ENCODE measurements at regions of chr6 and their contacts with region 1.

Region 1: GRCh38 chr6:39389484-39389767 is 66.9 kb upstream of the KCNK16 start:
- DNase-seq: no peak
- ATAC-seq: peak; percentile 23
- H3K4me3 ChIP-seq: no peak overlapping the region
- H3K27ac ChIP-seq: no peak overlapping the region
- H3K4me1 ChIP-seq: no peaks in the 10 kb centered on the region; the same call in 1 of the 2 replicates
- H3K27me3 ChIP-seq: peaks cover 0 to 3% of the 10 kb centered on the region in 2 experiments; a peak in 1 of 4 replicates
- CTCF ChIP-seq: no peak; a peak in 1 of 6 replicates
- EP300 ChIP-seq: no peak
- POLR2A ChIP-seq: no peak
- RAD21 ChIP-seq: peak; percentile 25; the same call in 1 of the 2 replicates

Region 2: DNA sequence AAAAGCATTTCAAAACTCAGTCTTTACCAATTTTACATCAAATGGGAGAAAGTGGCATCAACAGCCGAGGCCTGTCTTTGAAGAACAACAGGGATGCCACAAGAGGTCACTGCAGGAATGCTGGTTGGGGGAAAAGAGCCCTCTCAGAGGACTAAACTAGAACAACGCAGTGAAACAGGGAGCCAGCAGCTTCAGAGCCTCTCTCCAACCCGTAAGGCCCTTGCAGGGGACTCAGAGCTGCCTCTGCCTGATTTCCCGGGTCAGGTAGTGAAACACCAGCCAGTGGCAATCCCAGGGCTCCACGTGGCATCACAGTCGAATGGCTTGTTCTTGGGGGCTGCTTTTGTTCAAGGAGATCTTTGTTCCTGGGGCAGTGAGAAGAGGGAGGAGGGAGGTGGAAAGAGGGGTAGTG is 11.9 kb before region 1 on chr6:
- CTCF ChIA-PET with region 1: interaction called, 15 read pairs
- POLR2A ChIA-PET with region 1: no interaction called
- RAD21 ChIA-PET with region 1: interaction called, 3 read pairs
- SMC1A ChIA-PET with region 1: interaction called, 12 read pairs
- in situ Hi-C with region 1: no loop called
- intact Hi-C with region 1: no loop called
- DNase-seq: no peak
- ATAC-seq: peak; percentile 95
- H3K4me3 ChIP-seq: no peak overlapping the region
- H3K27ac ChIP-seq: no peak overlapping the region
- H3K4me1 ChIP-seq: no peaks in the 10 kb centered on the region
- H3K27me3 ChIP-seq: no peaks in the 10 kb centered on the region
- CTCF ChIP-seq: peak; percentile 50 to 73 (median 67)
- EP300 ChIP-seq: no peak
- POLR2A ChIP-seq: no peak
- RAD21 ChIP-seq: peak; percentile 75